Caco-2 (cell line): ENCODE measurements at regions of chr6 and their contacts with region 1.

Region 1: GRCh38 chr6:38997128-38997761 is 51.3 kb upstream of the GLP1R start:
- DNase-seq: peak; percentile 62 to 71
- H3K4me3 ChIP-seq: no peak overlapping the region
- H3K4me3 Mint-ChIP-seq: no peak overlapping the region
- H3K27ac Mint-ChIP-seq: no peak overlapping the region
- H3K4me1 ChIP-seq: no peaks in the 10 kb centered on the region
- H3K4me1 Mint-ChIP-seq: no peaks in the 10 kb centered on the region
- H3K27me3 ChIP-seq: no peaks in the 10 kb centered on the region
- H3K27me3 Mint-ChIP-seq: peaks cover 14% of the 10 kb centered on the region
- CTCF ChIP-seq: peak; percentile 69 to 88

Region 2: DNA sequence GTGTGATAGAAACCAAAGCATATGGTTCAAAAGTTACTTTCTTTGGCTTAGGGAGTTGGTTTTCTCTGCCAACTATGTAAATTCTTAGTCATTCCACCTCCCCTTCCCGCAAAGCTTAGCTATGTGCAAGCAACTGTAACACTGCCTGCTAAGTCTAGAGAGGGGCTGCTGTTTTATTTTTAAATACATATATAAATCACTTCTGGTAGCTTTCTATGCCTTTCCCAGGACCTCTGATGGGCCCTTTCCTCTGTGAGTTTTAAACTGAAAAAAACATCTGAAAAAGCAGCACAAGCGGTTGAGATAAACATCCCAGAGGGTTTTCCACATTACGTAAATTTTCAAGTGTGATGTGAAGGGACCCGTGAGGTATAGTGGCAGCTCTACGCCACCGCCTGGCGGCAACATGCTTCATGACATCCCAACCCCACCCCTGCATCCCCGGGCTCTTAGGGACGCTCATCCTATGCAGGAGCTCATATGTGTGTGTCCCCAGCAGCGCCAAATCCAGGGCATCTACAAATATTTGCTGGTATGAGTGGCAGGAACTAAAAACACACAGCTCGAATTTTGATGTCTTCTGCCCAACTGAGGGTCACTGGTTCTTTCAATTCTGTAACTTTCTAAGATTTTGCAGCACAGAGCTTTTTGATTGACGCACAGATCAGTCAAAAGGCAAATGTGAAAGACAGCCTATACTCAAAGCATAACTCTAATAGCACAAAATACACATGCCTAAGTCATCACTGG is 105.0 kb after region 1 on chr6:
- CTCF ChIA-PET with region 1: interaction called, 12 read pairs
- POLR2A ChIA-PET with region 1: no interaction called
- intact Hi-C with region 1: no loop called
- DNase-seq: peak in 1 of 2 experiments; percentile 33
- H3K4me3 ChIP-seq: no peak overlapping the region
- H3K4me3 Mint-ChIP-seq: no peak overlapping the region
- H3K27ac Mint-ChIP-seq: no peak overlapping the region
- H3K4me1 ChIP-seq: no peaks in the 10 kb centered on the region
- H3K4me1 Mint-ChIP-seq: no peaks in the 10 kb centered on the region
- H3K27me3 ChIP-seq: no peaks in the 10 kb centered on the region
- H3K27me3 Mint-ChIP-seq: no peaks in the 10 kb centered on the region
- CTCF ChIP-seq: peak; percentile 21 to 52

Region 3: DNA sequence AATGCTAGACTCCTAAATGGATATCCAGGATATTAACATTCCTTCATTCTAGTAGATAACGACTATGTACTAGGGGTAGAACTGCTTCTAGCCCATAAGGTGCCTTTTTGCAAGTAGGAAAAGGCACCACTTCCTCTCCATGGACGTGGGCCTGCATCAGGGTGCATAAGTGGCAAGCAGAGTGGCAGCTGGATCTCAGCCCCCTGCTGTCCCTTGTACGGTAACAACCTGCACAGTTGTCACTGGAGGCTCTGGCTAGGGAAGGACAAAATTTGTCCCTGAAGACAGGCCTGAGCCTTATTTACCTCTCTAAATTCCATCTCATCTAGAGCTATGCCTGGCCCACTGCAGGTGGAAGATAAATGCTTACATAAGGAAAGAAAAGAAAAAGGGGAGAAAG is 160.3 kb after region 1 on chr6:
- CTCF ChIA-PET with region 1: interaction called, 5 read pairs
- POLR2A ChIA-PET with region 1: no interaction called
- intact Hi-C with region 1: loop called (anchors 2 kb)
- DNase-seq: no peak
- H3K4me3 ChIP-seq: no peak overlapping the region
- H3K4me3 Mint-ChIP-seq: no peak overlapping the region
- H3K27ac Mint-ChIP-seq: no peak overlapping the region
- H3K4me1 ChIP-seq: no peaks in the 10 kb centered on the region
- H3K4me1 Mint-ChIP-seq: peaks cover 7% of the 10 kb centered on the region
- H3K27me3 ChIP-seq: no peaks in the 10 kb centered on the region
- H3K27me3 Mint-ChIP-seq: peaks cover under 1% of the 10 kb centered on the region
- CTCF ChIP-seq: no peak

Region 4: DNA sequence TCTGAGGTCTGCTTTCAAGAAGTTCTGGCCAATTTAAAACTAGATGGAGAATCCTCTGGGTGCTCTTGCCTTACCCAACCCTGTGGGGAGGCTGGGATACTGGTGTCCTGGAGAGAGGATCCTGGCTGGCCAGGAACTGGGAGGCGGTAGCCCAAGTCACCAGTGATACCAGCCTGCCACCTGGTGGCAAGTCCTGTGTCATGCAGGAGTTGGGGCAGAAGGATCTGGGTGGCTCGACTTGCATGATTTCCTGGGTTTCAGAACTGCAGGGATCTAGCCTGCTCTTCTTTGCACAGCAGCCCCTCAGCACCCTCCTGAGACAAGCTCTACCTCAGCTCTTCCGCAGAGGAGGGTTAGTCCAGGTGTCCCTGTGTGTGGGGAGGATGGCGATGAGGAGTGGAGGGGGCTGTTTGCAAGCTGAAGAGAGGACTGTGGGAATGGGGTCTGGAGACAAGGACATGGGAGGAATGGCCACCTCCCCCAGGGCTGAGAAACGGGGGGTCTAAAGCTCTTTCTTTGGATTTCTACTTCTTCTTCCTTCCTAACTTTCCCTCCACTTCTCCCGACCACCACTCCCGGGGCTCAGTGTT is 312.8 kb after region 1 on chr6:
- CTCF ChIA-PET with region 1: interaction called, 7 read pairs
- POLR2A ChIA-PET with region 1: no interaction called
- intact Hi-C with region 1: loop called (anchors 2 kb)
- DNase-seq: peak; percentile 74 to 85
- H3K4me3 ChIP-seq: no peak overlapping the region
- H3K4me3 Mint-ChIP-seq: no peak overlapping the region
- H3K27ac Mint-ChIP-seq: no peak overlapping the region
- H3K4me1 ChIP-seq: no peaks in the 10 kb centered on the region
- H3K4me1 Mint-ChIP-seq: no peaks in the 10 kb centered on the region
- H3K27me3 ChIP-seq: peaks cover 7% of the 10 kb centered on the region
- H3K27me3 Mint-ChIP-seq: peaks cover 12% of the 10 kb centered on the region
- CTCF ChIP-seq: peak; percentile 92